K562 (cell line): ENCODE measurements at regions of chr1 and their contacts with region 1.

Region 1: GRCh38 chr1:230066466-230067404 is at the start of gene GALNT2:
- DNase-seq: peak; percentile 97 to 99 (median 99)
- ATAC-seq: peak; percentile 88
- H3K4me3 ChIP-seq: peak within 1 kb of the TSS; percentile 82
- H3K27ac ChIP-seq: peak within 1 kb of the TSS; percentile 79
- H3K4me1 ChIP-seq: peaks cover 21 to 37% of the 10 kb centered on the region in 2 experiments
- H3K27me3 ChIP-seq: no peaks in the 10 kb centered on the region
- CTCF ChIP-seq: no peak
- EP300 ChIP-seq: no peak
- POLR2A ChIP-seq: peak; percentile 76
- RAD21 ChIP-seq: 0 out of 4 replicates have a peak, but pooled peaks of 1 of the 2 experiments have one; percentile 12
- polyA plus RNA-seq, gene GALNT2: 1.6 to 1.8 TPM

Region 2: DNA sequence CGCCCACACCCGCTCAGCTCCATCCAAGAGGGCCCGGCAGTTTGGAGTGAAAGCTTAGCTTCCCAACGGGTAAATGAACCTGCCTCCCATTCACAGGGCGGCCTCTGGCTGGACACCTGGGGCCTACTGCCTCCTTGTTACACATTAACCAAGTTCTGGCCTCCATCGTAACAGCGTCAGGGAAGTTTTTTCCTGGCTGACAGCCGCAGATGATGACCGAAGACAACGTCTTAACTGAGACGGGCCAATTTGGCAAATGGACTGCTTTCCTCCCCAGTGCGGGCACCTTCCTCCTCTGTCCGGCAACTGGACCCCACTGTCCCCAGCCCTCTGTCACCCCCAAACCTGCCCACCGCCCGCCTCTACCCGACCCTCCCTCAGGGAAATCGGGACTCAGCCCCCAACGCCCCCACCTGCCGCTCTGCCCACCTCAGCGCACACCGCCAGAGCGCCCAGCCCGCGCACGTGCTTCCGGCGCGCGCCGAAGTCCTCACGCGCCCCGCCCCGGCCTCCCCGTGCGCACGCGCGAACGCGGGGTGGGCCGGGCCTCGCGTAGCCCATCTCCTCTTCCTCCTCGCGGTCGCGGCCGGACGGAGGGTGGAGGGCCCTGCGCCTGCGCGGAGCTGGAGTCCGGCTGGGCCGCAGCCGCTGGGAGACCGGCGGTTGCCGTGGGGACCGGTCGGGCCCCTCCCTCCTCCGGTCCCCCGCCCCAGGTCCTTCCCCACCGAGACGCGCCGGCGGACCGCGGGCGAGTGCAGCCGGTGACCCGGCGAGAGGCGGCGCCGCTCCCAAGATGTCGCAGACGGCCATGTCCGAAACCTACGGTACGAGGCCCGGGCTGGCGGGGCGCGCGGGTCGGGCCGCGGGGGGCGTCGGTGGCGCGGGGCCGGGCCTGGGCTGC is 795.9 kb before region 1 on chr1 and contains the start of gene RAB4A:
- CTCF ChIA-PET with region 1: no interaction called
- POLR2A ChIA-PET with region 1: no interaction called
- in situ Hi-C with region 1: no loop called
- intact Hi-C with region 1: loop called (anchors 10 kb)
- DNase-seq: peak; percentile 96 to 100 (median 100)
- ATAC-seq: peak; percentile 96
- H3K4me3 ChIP-seq: peak within 1 kb of the TSS; percentile 78
- H3K27ac ChIP-seq: peak within 1 kb of the TSS; percentile 43
- H3K4me1 ChIP-seq: peaks cover 20 to 41% of the 10 kb centered on the region in 2 experiments; a peak in 4 of 5 replicates
- H3K27me3 ChIP-seq: no peaks in the 10 kb centered on the region; a peak in 1 of 5 replicates
- CTCF ChIP-seq: no peak
- EP300 ChIP-seq: no peak
- POLR2A ChIP-seq: peak; percentile 74
- RAD21 ChIP-seq: 0 out of 4 replicates have a peak, but pooled peaks of 1 of the 2 experiments have one; percentile 5
- polyA plus RNA-seq, gene RAB4A: 8.3 to 9.7 TPM

Region 3: GRCh38 chr1:230077436-230078221 is 10.9 kb after region 1 on chr1:
- CTCF ChIA-PET with region 1: no interaction called
- POLR2A ChIA-PET with region 1: interaction called, 21 read pairs
- in situ Hi-C with region 1: no loop called
- intact Hi-C with region 1: no loop called
- DNase-seq: no peak
- ATAC-seq: no peak
- H3K4me3 ChIP-seq: no peak overlapping the region
- H3K27ac ChIP-seq: no peak overlapping the region
- H3K4me1 ChIP-seq: peaks cover 5 to 12% of the 10 kb centered on the region in 2 experiments; a peak in 3 of 5 replicates
- H3K27me3 ChIP-seq: no peaks in the 10 kb centered on the region
- CTCF ChIP-seq: no peak
- EP300 ChIP-seq: no peak
- POLR2A ChIP-seq: no peak
- RAD21 ChIP-seq: no peak

Region 4: DNA sequence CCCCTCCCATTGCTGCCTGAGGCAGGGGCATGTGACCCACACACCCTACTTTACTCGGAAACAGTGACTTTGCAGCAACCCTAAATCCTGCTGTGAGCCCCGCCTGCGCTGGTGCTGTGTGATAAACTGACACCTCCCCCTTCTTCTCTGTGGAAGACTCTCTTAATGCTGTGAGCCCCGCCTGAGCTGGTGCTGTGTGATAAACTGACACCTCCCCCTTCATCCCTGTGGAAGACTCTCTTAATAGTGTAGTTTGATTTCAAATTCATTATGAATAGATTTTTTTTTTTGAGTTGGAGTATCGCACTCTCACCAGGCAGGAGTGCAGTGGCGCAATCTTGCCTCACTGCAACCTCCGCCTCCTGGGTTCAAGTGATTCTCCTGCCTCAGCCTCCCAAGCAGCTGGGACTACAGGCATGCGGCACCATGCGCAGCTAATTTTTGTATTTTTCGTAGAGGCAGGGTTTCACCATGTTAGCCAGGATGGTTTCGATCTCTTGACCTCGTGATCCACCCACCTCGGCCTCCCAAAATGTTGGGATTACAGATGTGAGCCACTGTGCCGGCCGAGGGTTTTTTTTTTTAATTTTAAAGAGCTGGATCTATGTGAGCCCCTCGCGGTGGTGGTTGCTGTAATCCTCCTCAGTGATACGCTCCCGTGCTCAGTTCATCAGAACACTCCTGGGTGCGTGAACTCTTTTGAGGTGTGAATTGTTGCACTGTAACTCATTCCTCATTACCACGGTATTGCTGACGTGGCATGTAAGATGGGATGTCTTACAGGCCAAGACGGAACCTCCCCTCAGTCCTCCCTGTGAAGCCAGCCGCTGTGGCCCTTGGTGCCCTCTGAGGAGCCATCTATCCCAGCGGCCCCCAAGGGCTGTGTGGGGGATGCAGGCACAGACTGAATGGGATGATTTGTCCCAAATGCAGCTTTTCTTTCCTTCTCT is 60.6 kb after region 1 on chr1:
- CTCF ChIA-PET with region 1: no interaction called
- POLR2A ChIA-PET with region 1: interaction called, 4 read pairs
- in situ Hi-C with region 1: no loop called
- intact Hi-C with region 1: loop called (anchors 2 kb)
- DNase-seq: peak; percentile 82 to 99 (median 90)
- ATAC-seq: peak; percentile 94
- H3K4me3 ChIP-seq: no peak overlapping the region
- H3K27ac ChIP-seq: peak overlapping the region; percentile 76
- H3K4me1 ChIP-seq: peaks cover 64 to 74% of the 10 kb centered on the region in 2 experiments
- H3K27me3 ChIP-seq: no peaks in the 10 kb centered on the region
- CTCF ChIP-seq: peak in 1 of 3 experiments; percentile 26; a peak in 2 of 6 replicates
- EP300 ChIP-seq: peak; percentile 98
- POLR2A ChIP-seq: no peak
- RAD21 ChIP-seq: no peak; a peak in 2 of 4 replicates

Region 5: GRCh38 chr1:230149751-230150584 is 83.2 kb after region 1 on chr1:
- CTCF ChIA-PET with region 1: no interaction called
- POLR2A ChIA-PET with region 1: no interaction called
- in situ Hi-C with region 1: no loop called
- intact Hi-C with region 1: loop called (anchors 5 kb)
- DNase-seq: peak in 3 of 4 experiments; percentile 43 to 71 (median 56)
- ATAC-seq: peak; percentile 57
- H3K4me3 ChIP-seq: peak overlapping the region; percentile 2; the same call in 1 of the 2 replicates
- H3K27ac ChIP-seq: peak overlapping the region; percentile 71
- H3K4me1 ChIP-seq: peaks cover 77 to 88% of the 10 kb centered on the region in 2 experiments
- H3K27me3 ChIP-seq: no peaks in the 10 kb centered on the region
- CTCF ChIP-seq: peak; percentile 21 to 45 (median 28); a peak in 3 of 6 replicates
- EP300 ChIP-seq: no peak
- POLR2A ChIP-seq: no peak
- RAD21 ChIP-seq: peak in 1 of 2 experiments; percentile 38; a peak in 1 of 4 replicates

Region 6: DNA sequence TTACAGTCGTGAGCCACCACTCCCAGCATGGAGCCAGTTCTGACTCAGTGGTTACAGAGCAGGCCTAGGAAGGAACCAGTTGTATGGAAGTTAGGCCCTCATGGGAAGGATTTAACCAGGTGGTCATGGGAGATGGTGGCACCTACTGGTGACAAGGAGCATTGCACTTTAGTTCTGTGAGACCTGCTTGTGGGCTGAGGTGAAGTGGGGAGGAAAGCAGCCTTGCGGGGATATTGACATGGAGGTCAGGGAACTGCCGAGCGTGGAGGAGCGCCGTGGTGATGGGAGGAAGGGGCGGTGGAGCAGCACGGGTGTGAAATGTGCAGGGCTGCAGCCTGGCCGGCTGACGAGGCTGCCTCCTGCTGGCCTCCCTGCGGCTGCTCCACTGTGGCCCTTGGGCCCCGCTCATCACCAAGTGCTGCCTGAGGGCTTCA is 100.7 kb after region 1 on chr1:
- CTCF ChIA-PET with region 1: no interaction called
- POLR2A ChIA-PET with region 1: no interaction called
- in situ Hi-C with region 1: no loop called
- intact Hi-C with region 1: loop called (anchors 2 kb)
- DNase-seq: peak; percentile 80 to 86 (median 84)
- ATAC-seq: peak; percentile 89
- H3K4me3 ChIP-seq: no peak overlapping the region
- H3K27ac ChIP-seq: no peak overlapping the region
- H3K4me1 ChIP-seq: peaks cover 13 to 34% of the 10 kb centered on the region in 2 experiments
- H3K27me3 ChIP-seq: no peaks in the 10 kb centered on the region
- CTCF ChIP-seq: peak; percentile 82 to 97 (median 88)
- EP300 ChIP-seq: peak; percentile 11; the same call in 1 of the 2 replicates
- POLR2A ChIP-seq: no peak
- RAD21 ChIP-seq: peak; percentile 73 to 96